ENCODE measurements at regions of chr9 and their contacts with region 1.

Region 1: DNA sequence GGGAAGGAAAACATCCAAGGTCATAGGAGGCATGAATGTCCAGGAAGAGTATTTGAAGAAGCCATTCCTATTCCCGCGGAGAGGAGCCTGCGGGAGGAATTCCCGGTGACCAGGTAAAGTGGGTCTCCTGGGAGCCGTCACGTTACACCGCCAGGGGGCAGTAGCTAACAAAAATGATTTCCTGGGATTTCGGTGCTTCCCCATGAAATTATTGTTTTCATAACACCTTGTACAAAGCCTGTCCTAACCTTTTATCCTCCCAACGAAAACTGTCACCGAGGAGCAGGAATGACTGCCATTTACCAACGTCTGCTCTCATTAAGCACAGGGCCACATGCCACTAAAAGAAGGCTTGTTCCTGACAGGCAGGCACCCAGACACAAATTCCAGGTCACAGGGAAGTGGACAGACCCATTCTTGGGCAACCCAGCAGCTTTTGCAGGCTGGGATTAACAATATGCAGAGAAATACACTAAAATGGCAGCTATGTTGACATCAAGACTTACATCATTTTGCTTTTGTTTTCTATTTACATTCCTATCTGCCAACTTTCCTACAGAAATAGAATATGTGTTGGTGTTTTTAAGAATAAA is 41.2 kb upstream of the CTSL start:
- DNase-seq: peak in 1 of 2 experiments; percentile 84
- H3K4me3 ChIP-seq: no peak overlapping the region
- H3K27ac ChIP-seq: no peak overlapping the region
- H3K4me1 ChIP-seq: no peaks in the 10 kb centered on the region; a peak in 2 of 7 replicates
- H3K27me3 ChIP-seq: no peaks in the 10 kb centered on the region
- CTCF ChIP-seq: peak; percentile 70 to 80 (median 76)
- EP300 ChIP-seq: no peak
- POLR2A ChIP-seq: no peak
- RAD21 ChIP-seq: peak; percentile 43 to 58; a peak in 3 of 4 replicates

Region 2: DNA sequence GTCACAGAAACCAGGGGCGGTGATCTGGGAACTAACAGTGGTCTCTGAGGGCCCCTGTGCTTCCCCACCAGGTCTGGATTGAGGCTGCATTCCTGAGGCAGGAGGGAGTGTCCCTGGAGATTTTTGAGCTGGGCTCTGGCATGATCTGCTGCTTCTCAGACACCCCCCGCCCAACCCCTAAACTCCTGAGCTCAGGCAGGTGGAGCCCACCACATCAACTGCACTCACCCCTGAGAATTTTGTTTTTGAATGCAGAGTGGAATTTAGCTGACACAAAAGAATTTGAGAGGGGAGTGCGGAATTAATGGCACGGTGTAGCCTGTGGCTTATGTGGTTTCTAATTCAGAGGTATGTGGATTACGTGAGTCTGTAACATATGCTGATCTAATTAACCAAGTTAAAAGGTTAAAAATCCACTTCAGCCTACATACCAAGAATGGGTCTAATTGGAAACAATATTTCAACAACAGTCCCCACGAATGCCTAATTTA is 17.3 kb after region 1 on chr9:
- CTCF ChIA-PET with region 1: interaction called, 61 read pairs
- POLR2A ChIA-PET with region 1: no interaction called
- DNase-seq: no peak
- H3K4me3 ChIP-seq: no peak overlapping the region
- H3K27ac ChIP-seq: no peak overlapping the region
- H3K4me1 ChIP-seq: 0 out of 7 replicates have a peak, but pooled peaks cover 0 to 4% (median 0%) of the 10 kb centered on the region in 4 experiments
- H3K27me3 ChIP-seq: no peaks in the 10 kb centered on the region
- CTCF ChIP-seq: no peak
- EP300 ChIP-seq: no peak
- POLR2A ChIP-seq: no peak
- RAD21 ChIP-seq: no peak

Region 3: GRCh38 chr9:87707805-87708506 is 23.2 kb after region 1 on chr9:
- CTCF ChIA-PET with region 1: interaction called, 10 read pairs
- POLR2A ChIA-PET with region 1: no interaction called
- DNase-seq: no peak
- H3K4me3 ChIP-seq: no peak overlapping the region
- H3K27ac ChIP-seq: no peak overlapping the region
- H3K4me1 ChIP-seq: no peaks in the 10 kb centered on the region; a peak in 1 of 7 replicates
- H3K27me3 ChIP-seq: no peaks in the 10 kb centered on the region
- CTCF ChIP-seq: no peak
- EP300 ChIP-seq: no peak
- POLR2A ChIP-seq: no peak
- RAD21 ChIP-seq: no peak

Region 4: DNA sequence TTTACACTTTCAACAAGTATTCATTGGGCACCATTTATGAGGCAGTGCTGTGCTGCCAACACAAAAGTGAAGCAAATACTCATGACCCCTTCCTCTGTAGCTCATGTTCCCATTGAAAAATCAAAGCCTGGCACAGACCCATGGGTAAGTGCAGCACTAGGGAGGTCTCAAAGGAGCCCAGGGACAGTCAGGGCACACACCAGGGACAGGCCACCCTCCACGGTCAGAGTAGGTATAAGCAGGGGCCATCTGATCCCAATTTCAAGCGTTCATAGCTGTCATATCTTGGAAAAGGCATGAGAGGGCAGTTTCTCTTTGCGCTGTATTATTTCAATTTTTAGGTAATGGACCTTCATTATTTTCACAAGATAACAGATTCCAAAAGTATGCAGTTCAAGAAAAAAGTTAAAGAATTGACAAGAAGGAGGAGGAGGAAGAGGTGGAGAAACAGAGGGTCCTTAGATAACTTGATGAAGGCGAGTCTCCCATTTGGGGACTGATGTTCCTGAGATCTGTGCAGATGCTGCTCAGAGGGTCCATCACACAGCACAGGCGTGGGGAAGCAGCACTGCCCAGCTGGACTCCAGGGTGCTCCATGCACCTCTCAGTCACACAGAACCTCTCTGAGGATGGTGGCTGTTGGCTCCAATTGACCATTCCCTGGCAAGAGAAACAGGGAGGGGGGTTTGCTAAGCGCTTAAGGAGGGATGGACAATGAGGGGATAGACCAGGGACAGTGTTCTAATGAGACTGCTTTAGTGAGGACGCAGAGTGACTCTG is 48.7 kb after region 1 on chr9:
- CTCF ChIA-PET with region 1: interaction called, 12 read pairs
- POLR2A ChIA-PET with region 1: interaction called, 3 read pairs
- DNase-seq: no peak
- H3K4me3 ChIP-seq: no peak overlapping the region
- H3K27ac ChIP-seq: no peak overlapping the region
- H3K4me1 ChIP-seq: no peaks in the 10 kb centered on the region
- H3K27me3 ChIP-seq: no peaks in the 10 kb centered on the region
- CTCF ChIP-seq: no peak
- EP300 ChIP-seq: no peak
- POLR2A ChIP-seq: no peak
- RAD21 ChIP-seq: no peak

Region 5: DNA sequence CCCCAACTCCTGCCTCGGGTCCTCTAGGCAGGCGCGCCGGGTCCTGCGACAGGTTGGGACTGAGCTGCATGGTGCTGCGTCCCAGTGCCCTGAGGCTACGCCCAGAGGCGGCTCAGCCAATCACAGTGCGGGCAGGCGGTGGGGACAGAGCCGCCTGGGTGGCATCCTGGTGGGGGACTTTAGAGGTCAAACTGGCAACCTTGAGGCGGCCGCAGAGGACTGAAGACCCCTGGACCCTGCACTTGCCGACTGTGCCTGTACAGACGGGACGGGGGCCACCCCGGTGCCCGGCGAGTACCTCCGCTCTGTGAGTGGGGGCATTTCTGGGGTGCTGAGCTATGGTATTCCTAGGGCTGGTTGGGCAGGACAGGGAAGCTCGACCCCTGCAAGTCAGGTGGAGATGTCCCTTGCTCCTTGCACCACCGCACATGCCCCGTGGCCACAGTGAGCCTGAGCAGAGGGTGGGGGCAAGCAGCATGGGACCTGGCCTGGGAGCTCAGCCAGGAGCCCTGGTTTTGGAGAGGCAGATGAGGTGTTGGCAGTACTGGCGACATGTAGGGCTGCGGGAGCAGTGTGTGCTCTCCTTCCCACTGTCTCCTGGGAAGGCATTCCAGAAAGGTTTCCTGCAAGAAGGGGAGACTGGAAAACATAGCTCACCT is 86.7 kb after region 1 on chr9:
- CTCF ChIA-PET with region 1: interaction called, 20 read pairs
- POLR2A ChIA-PET with region 1: no interaction called
- DNase-seq: peak; percentile 44 to 80
- H3K4me3 ChIP-seq: no peak overlapping the region
- H3K27ac ChIP-seq: no peak overlapping the region
- H3K4me1 ChIP-seq: peaks cover 0 to 6% (median 1%) of the 10 kb centered on the region in 4 experiments; a peak in 3 of 7 replicates
- H3K27me3 ChIP-seq: no peaks in the 10 kb centered on the region
- CTCF ChIP-seq: no peak; a peak in 1 of 4 replicates
- EP300 ChIP-seq: no peak
- POLR2A ChIP-seq: no peak
- RAD21 ChIP-seq: no peak; a peak in 1 of 4 replicates

Region 6: GRCh38 chr9:87803622-87804345 is 119.1 kb after region 1 on chr9:
- CTCF ChIA-PET with region 1: interaction called, 17 read pairs
- POLR2A ChIA-PET with region 1: no interaction called
- DNase-seq: no peak
- H3K4me3 ChIP-seq: no peak overlapping the region
- H3K27ac ChIP-seq: no peak overlapping the region
- H3K4me1 ChIP-seq: no peaks in the 10 kb centered on the region; a peak in 1 of 7 replicates
- H3K27me3 ChIP-seq: no peaks in the 10 kb centered on the region
- CTCF ChIP-seq: no peak
- EP300 ChIP-seq: no peak
- POLR2A ChIP-seq: no peak
- RAD21 ChIP-seq: no peak